Naive thymus-derived CD4-positive, alpha-beta T cell (primary cell): ENCODE measurements at regions of chr6 and their contacts with region 1.

Region 1: DNA sequence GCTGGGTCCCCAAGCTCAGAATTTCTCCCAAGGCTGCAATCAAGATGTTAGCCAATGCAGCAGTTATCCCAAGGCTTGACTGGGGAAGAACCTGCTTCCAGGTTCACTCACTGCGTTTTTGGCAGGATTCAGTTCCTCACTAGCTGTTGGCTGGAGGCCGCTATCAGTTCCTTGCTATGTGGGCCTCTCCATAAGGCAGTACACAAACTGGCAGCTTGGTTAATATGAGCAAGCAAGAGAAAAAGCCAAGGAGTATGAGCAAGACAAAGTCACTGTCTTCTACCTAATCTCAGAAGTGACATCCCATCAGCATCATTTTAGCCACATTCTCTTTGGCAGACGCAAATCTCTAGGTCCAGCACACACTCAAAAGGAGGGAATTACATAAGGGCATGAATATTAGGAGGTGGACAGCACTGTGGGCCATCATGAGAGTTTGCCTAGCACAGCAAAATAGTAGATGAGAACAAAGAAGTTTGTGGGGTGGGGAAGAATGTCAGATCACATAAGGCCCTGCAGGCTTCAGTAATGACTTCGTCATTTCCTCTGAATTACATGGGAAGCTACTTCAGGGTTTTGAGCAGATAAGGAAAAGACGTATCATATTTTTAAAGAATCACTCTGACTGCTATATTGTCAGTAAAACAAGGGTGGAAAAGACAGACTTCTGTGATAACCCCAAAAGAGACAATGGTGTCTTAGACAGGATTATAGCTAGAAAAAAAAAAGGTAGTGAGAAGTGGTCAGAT is 25.5 kb downstream of the LMBRD1 start:
- DNase-seq: no peak
- ATAC-seq: no peak
- H3K4me3 ChIP-seq: no peak overlapping the region
- H3K4me3 Mint-ChIP-seq: no peak overlapping the region
- H3K27ac ChIP-seq: no peak overlapping the region
- H3K27ac Mint-ChIP-seq: peak overlapping the region in 1 of 9 donors; percentile 28
- H3K4me1 ChIP-seq: no peaks in the 10 kb centered on the region
- H3K4me1 Mint-ChIP-seq: peaks cover 11 to 84% (median 61%) of the 10 kb centered on the region in 7 donors
- H3K27me3 ChIP-seq: no peaks in the 10 kb centered on the region
- H3K27me3 Mint-ChIP-seq: no peaks in the 10 kb centered on the region

Region 2: GRCh38 chr6:69784595-69785377 is 13.5 kb after region 1 on chr6:
- CTCF ChIA-PET with region 1: no interaction called
- POLR2A ChIA-PET with region 1: no interaction called
- intact Hi-C with region 1: loop called in 1 of 2 experiments (anchors 2 kb)
- DNase-seq: no peak
- ATAC-seq: peak; percentile 20
- H3K4me3 ChIP-seq: no peak overlapping the region
- H3K4me3 Mint-ChIP-seq: peak overlapping the region in 7 of 10 donors; percentile 1 to 67 (median 5)
- H3K27ac ChIP-seq: no peak overlapping the region
- H3K27ac Mint-ChIP-seq: peak overlapping the region in 5 of 9 donors; percentile 3 to 41 (median 8)
- H3K4me1 ChIP-seq: peaks cover 5 to 19% of the 10 kb centered on the region in 2 donors
- H3K4me1 Mint-ChIP-seq: peaks cover 31 to 74% (median 58%) of the 10 kb centered on the region in 7 donors
- H3K27me3 ChIP-seq: no peaks in the 10 kb centered on the region
- H3K27me3 Mint-ChIP-seq: no peaks in the 10 kb centered on the region